CD4-positive, alpha-beta memory T cell (primary cell): ENCODE measurements at regions of chr17 and their contacts with region 1.

Region 1: DNA sequence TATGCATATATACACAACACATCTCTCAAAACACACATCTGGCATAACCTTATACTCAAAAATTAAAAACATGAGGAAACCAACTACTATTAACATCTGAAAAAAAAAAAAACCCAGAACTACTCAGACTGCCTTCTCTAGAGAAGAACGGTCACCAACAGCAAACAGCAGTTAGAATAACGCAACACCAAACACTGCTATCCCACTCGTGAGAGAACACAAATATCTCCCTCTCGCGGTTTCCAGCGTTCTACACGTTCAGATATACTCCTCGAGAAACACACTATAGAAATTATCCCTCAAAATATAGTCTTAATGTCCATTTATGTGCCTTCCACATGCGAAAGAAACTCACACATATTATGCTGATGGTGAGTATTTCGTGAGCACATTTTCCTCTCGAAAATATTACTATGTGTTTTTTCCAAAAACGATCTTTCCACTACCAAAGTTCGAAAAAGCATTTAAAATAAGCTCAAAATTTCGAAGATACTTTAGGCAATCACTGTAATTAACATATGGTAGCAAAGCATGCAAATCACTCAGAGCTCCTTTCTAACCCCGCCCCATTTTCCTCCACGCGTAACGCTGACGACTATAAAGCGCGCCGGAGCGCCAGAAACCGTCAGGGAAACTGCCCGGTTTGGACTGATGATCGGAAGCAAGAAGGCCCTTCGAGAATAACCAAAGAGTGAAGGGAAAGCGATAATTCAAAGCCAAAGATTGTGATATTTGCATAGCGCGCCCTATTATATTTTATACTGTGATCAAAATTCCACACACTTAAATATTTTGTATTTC is 60.1 kb downstream of the TEX14 start:
- DNase-seq: peak; percentile 92 to 95 (median 94)
- H3K4me3 ChIP-seq: peak overlapping the region; percentile 31 to 47
- H3K4me3 Mint-ChIP-seq: no peak overlapping the region
- H3K27ac ChIP-seq: peak overlapping the region; percentile 83
- H3K27ac Mint-ChIP-seq: no peak overlapping the region
- H3K4me1 ChIP-seq: peaks cover 16% of the 10 kb centered on the region
- H3K4me1 Mint-ChIP-seq: peaks cover 0 to 4% (median 1%) of the 10 kb centered on the region in 4 donors
- H3K27me3 ChIP-seq: no peaks in the 10 kb centered on the region
- H3K27me3 Mint-ChIP-seq: no peaks in the 10 kb centered on the region

Region 2: DNA sequence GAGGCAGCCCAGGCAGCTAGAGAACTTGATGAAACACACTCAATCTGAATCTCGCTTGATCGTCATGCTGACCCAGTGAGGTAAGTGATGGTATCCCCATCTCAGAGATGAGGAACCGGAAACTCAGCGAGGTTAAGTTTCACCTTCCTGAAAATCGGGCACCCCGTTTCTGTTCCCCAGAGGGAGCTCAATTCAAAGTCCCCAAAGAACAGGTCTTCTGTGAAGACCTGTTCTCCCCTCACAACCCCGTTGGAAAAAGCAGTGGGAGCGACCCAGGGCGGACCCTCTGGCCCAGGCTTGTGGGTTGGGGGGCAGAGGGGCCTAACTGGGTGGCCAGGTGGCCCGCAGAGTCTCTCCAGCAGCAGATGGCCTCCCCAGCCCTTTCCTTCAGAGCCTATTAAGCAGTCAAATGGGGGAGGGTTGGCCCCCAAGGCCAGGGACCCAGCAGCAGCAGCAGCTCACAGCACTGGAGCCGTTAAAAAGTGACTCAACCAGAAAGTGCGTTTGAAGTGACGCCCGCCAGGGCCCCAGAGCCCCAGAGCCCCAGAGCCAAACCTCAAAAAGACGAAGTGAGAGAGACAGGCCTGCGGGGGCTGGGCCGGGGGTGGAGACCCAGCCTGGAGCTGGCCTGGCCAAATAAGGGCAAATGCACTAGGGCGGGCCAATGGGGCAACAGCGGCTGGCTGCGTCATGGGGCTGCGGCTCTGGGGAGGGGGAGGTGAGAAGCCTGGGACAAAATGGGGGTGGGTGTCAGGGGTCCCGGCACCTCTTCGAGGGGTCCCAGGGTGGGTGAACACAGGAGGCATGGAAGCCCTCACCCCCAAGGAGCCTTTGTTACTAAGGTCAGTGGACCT is 293.9 kb before region 1 on chr17:
- CTCF ChIA-PET with region 1: no interaction called
- POLR2A ChIA-PET with region 1: no interaction called
- intact Hi-C with region 1: loop called (anchors 5 kb)
- DNase-seq: peak; percentile 89 to 96 (median 91)
- H3K4me3 ChIP-seq: peak overlapping the region; percentile 99
- H3K4me3 Mint-ChIP-seq: peak overlapping the region; percentile 88 to 99 (median 98)
- H3K27ac ChIP-seq: peak overlapping the region; percentile 97
- H3K27ac Mint-ChIP-seq: peak overlapping the region; percentile 94 to 99 (median 97)
- H3K4me1 ChIP-seq: peaks cover 89% of the 10 kb centered on the region
- H3K4me1 Mint-ChIP-seq: peaks cover 41 to 98% (median 64%) of the 10 kb centered on the region in 4 donors
- H3K27me3 ChIP-seq: no peaks in the 10 kb centered on the region
- H3K27me3 Mint-ChIP-seq: no peaks in the 10 kb centered on the region

Region 3: DNA sequence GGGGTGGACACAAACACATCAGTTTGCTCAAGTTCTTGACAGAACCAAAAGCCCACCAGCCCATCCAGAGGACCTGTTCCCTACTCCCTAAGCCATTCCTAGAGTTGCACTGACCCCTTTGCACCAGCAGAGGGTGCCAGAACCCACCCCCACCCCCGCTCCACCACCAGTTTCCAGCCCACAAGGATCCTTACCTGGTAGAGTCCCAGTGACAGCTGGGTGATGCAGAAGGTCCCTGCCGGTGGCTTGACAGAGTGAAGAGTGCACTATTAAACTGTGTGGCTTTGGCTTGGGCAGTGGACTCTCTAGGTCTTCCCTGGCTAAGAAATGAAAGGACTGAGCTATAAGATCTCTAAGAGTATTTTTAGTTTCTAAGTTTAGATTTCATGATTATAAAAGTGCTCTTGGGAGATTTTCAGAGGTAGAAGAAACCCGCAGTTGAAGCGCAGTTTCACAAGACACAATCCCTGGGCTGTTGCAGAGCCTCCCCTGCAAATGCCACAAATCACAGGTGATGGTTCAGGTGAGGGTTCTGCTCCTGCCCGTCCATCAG is 43.9 kb before region 1 on chr17:
- CTCF ChIA-PET with region 1: interaction called, 12 read pairs
- POLR2A ChIA-PET with region 1: interaction called, 13 read pairs
- intact Hi-C with region 1: loop called (anchors 1 kb)
- DNase-seq: peak; percentile 46 to 54 (median 48)
- H3K4me3 ChIP-seq: no peak overlapping the region
- H3K4me3 Mint-ChIP-seq: no peak overlapping the region
- H3K27ac ChIP-seq: no peak overlapping the region
- H3K27ac Mint-ChIP-seq: no peak overlapping the region
- H3K4me1 ChIP-seq: no peaks in the 10 kb centered on the region
- H3K4me1 Mint-ChIP-seq: peaks cover 0 to 4% (median 2%) of the 10 kb centered on the region in 4 donors
- H3K27me3 ChIP-seq: no peaks in the 10 kb centered on the region
- H3K27me3 Mint-ChIP-seq: peaks cover 0 to 2% of the 10 kb centered on the region in 2 donors

Region 4: DNA sequence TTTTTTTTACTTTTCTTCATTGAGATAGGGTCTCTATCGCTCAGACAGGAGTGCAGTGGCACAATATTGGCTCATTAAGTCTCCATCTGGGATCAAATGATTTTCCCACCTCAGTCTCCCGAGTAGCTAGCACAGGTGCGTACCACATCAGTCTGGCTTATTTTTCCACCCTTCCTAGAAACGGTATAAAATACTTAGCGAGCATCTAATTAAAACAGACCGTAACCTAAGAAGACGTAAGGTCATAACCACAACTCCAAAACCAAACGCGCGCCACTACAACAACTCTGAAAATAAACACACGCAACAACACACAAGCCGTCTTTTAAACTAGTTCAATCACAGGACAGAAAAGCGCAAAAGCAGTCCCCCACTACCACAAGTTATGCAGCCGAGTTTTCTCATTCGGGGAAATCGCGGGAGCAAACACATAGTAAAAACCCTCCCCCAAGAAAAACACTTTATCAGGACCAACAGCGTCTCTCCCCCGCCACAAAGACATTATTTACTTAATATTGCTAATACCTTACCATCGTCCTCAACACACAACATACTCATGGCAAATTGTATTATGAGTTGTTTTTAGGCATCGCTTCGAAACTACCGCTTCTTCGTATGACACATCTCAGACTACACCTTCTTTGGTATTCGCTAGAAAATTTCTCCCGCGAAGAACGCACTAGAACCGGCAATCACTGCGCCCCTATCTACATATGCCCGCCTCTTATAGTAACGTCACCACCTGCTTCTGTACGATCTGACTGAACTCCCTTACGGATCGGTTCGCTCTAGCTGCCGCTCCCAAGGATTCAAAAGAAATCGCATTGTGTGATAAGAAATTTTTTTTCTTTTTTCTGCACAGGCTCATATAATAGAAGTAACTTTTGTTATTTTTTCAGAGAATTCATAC is 27.3 kb after region 1 on chr17:
- CTCF ChIA-PET with region 1: interaction called, 3 read pairs
- POLR2A ChIA-PET with region 1: interaction called, 101 read pairs
- intact Hi-C with region 1: loop called (anchors 1 kb)
- DNase-seq: peak; percentile 87 to 91 (median 89)
- H3K4me3 ChIP-seq: peak overlapping the region; percentile 43 to 83
- H3K4me3 Mint-ChIP-seq: peak overlapping the region; percentile 83 to 95 (median 91)
- H3K27ac ChIP-seq: peak overlapping the region; percentile 77
- H3K27ac Mint-ChIP-seq: peak overlapping the region; percentile 97 to 100 (median 100)
- H3K4me1 ChIP-seq: peaks cover 13% of the 10 kb centered on the region
- H3K4me1 Mint-ChIP-seq: peaks cover 12 to 18% (median 15%) of the 10 kb centered on the region in 4 donors
- H3K27me3 ChIP-seq: no peaks in the 10 kb centered on the region
- H3K27me3 Mint-ChIP-seq: peaks cover 0 to 2% of the 10 kb centered on the region in 2 donors

Region 5: GRCh38 chr17:58692239-58693055 is 60.7 kb after region 1 on chr17 and contains the start of gene RAD51C:
- CTCF ChIA-PET with region 1: no interaction called
- POLR2A ChIA-PET with region 1: interaction called, 44 read pairs
- intact Hi-C with region 1: loop called (anchors 1 kb)
- DNase-seq: peak; percentile 77 to 85 (median 84)
- H3K4me3 ChIP-seq: peak within 1 kb of the TSS; percentile 77 to 83
- H3K4me3 Mint-ChIP-seq: peak within 1 kb of the TSS; percentile 85 to 97 (median 93)
- H3K27ac ChIP-seq: peak within 1 kb of the TSS; percentile 72
- H3K27ac Mint-ChIP-seq: peak within 1 kb of the TSS; percentile 73 to 98 (median 92)
- H3K4me1 ChIP-seq: peaks cover 29% of the 10 kb centered on the region
- H3K4me1 Mint-ChIP-seq: peaks cover 18 to 27% (median 23%) of the 10 kb centered on the region in 4 donors
- H3K27me3 ChIP-seq: no peaks in the 10 kb centered on the region
- H3K27me3 Mint-ChIP-seq: no peaks in the 10 kb centered on the region
- total RNA-seq, gene RAD51C: 25.8 to 28.2 TPM

Region 6: GRCh38 chr17:59106463-59107305 is 475.0 kb after region 1 on chr17 and contains the start of gene TRIM37:
- CTCF ChIA-PET with region 1: no interaction called
- POLR2A ChIA-PET with region 1: interaction called, 9 read pairs
- intact Hi-C with region 1: loop called (anchors 1 kb)
- DNase-seq: peak; percentile 99 to 100 (median 99)
- H3K4me3 ChIP-seq: peak within 1 kb of the TSS; percentile 67 to 71
- H3K4me3 Mint-ChIP-seq: peak within 1 kb of the TSS; percentile 90 to 96 (median 92)
- H3K27ac ChIP-seq: peak within 1 kb of the TSS; percentile 81
- H3K27ac Mint-ChIP-seq: peak within 1 kb of the TSS; percentile 90 to 97 (median 95)
- H3K4me1 ChIP-seq: peaks cover 29% of the 10 kb centered on the region
- H3K4me1 Mint-ChIP-seq: peaks cover 25 to 47% (median 37%) of the 10 kb centered on the region in 4 donors
- H3K27me3 ChIP-seq: no peaks in the 10 kb centered on the region
- H3K27me3 Mint-ChIP-seq: no peaks in the 10 kb centered on the region
- total RNA-seq, gene TRIM37: 20.7 to 25.0 TPM

Region 7: GRCh38 chr17:59155439-59156182 is 523.9 kb after region 1 on chr17 and contains the start of gene PRR11:
- CTCF ChIA-PET with region 1: no interaction called
- POLR2A ChIA-PET with region 1: interaction called, 13 read pairs
- intact Hi-C with region 1: no loop called
- DNase-seq: peak in 3 of 5 donors; percentile 98 to 99 (median 99)
- H3K4me3 ChIP-seq: peak within 1 kb of the TSS; percentile 93 to 98
- H3K4me3 Mint-ChIP-seq: no peak within 1 kb of the TSS
- H3K27ac ChIP-seq: peak within 1 kb of the TSS; percentile 65
- H3K27ac Mint-ChIP-seq: no peak within 1 kb of the TSS
- H3K4me1 ChIP-seq: peaks cover 60% of the 10 kb centered on the region
- H3K4me1 Mint-ChIP-seq: peaks cover 25 to 53% (median 39%) of the 10 kb centered on the region in 4 donors
- H3K27me3 ChIP-seq: no peaks in the 10 kb centered on the region
- H3K27me3 Mint-ChIP-seq: no peaks in the 10 kb centered on the region
- total RNA-seq, gene PRR11: 0.93 to 2.1 TPM